ENCODE measurements at regions of chr19 and their contacts with region 1.

Region 1: DNA sequence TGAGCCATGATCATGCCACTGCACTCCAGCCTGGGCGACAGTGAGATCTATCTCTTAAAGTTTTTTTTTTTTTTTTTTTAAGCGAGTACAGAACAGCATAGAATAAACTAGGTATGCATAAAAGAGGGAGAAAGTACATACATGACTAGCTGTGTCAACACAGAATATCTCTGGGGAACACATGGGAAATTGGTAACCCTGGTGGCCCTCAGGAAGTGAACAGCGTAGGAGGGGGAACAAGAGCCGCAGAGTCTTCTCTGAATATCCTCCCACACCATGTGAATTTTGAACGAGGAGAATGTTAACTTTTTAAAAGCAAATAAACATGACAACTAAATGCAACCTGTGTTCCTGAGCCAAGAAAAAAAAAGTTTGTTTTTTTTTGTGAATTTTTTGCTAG is 15.2 kb downstream of the PHLDB3 start:
- H3K4me3 Mint-ChIP-seq: no peak overlapping the region
- H3K27ac Mint-ChIP-seq: peak overlapping the region; percentile 18
- H3K4me1 Mint-ChIP-seq: peaks cover 49% of the 10 kb centered on the region
- H3K27me3 Mint-ChIP-seq: no peaks in the 10 kb centered on the region

Region 2: DNA sequence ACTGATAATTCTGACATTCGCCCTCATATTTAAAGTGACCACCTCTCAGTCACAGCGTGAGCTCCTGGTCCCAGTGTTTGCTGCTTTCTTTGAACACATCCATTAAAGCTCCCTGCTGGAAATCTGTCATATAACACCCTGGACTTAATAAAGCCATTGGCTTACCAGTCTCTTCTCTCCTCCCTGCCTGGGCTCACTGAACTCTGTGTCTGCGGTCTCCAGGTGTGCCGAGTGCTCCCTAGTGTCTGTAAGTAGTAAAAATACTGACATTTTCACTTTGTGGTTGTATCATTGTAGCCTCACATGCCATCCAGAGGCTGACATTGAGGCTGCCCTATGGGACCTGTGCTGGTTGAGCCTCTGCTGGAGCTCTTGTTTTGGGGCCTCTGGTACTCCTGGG is 460.4 kb before region 1 on chr19:
- intact Hi-C with region 1: no loop called
- H3K4me3 Mint-ChIP-seq: no peak overlapping the region
- H3K27ac Mint-ChIP-seq: no peak overlapping the region
- H3K4me1 Mint-ChIP-seq: no peaks in the 10 kb centered on the region
- H3K27me3 Mint-ChIP-seq: peaks cover 1% of the 10 kb centered on the region

Region 3: DNA sequence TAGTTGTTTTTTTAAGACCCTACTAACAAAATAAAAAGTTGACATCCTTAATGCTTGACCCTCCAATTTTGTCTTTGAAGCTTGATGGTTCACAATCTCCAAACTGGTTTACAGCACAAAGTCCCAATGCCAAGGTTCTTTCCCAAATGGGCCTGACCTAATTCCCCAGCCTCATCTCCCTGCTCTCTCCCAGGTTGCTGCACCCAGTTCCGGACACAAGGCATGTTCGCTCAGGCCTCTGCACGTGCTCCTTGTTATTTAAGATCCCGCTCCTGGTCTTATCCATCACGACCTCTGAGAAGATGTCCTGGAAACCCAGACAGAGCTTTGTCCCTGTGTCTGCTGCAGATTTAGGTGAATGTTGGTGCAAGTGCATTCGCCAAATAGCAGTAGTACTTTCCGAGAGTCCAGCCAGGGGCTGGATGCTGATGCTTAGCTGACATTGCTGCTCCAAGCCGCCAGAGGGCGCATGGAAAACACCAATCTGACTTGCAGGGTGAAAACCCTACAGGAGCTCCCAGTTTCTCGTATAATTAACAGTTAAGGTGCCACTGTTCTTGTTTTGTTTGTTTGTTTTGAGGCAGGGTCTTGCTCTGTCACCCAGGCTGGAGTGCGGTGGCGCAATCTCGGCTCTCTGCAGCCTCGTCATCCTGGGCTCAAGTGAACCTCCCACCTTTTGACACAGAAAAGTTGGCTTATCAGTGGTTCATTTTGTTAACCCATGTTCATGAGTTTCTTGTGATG is 42.4 kb before region 1 on chr19:
- intact Hi-C with region 1: loop called (anchors 5 kb)
- H3K4me3 Mint-ChIP-seq: no peak overlapping the region
- H3K27ac Mint-ChIP-seq: no peak overlapping the region
- H3K4me1 Mint-ChIP-seq: peaks cover 79% of the 10 kb centered on the region
- H3K27me3 Mint-ChIP-seq: peaks cover 10% of the 10 kb centered on the region

Region 4: DNA sequence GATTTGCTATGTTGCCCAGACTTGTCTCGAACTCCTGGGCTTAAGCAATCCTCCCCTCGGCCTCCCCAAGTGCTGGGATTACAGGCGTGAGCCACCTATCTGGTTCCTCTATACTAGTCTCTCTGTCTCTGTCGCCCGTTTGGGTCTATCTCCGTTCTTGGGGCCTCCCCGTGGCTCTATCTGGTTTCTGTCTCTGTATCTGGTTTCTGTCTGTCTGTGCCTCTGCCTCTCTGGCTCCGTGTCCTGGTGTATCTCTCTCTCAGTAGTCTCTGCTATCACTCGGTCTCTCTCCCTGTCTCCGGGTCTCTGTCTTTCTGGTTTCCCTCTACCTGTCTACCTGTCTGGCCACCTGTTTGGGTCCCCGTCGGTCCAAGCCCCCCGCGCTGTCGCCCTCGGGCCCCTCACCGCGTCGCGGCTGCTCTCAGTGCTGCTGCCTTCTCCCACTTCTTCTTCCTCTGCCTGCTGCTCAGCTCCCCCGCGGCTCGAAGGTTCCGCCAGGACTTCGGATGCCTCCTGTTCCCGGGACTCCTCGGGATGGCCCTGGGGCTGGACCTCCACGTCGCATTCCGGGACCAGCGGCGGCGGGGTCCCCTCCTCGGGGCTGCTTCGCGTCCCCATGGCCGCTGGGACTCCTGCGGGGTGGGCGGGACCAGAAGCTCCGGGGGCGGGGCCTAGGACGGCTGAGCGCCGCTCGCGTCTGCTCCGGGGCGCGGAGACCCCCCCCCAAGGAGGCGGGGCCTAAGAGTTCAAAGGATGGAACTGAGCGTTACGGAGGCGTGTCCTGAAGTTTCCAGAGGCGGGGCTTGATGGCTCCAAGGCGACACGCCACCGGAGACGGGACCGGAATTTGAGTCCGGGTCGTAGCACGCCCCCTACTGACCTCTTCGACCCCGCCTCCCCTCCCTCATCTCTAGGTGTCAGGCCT is 14.5 kb after region 1 on chr19:
- intact Hi-C with region 1: no loop called
- H3K4me3 Mint-ChIP-seq: peak overlapping the region; percentile 100
- H3K27ac Mint-ChIP-seq: peak overlapping the region; percentile 93
- H3K4me1 Mint-ChIP-seq: peaks cover 44% of the 10 kb centered on the region
- H3K27me3 Mint-ChIP-seq: peaks cover 4% of the 10 kb centered on the region

Region 5: GRCh38 chr19:43584484-43584883 is 95.2 kb after region 1 on chr19:
- intact Hi-C with region 1: no loop called
- H3K4me3 Mint-ChIP-seq: no peak overlapping the region
- H3K27ac Mint-ChIP-seq: peak overlapping the region; percentile 77
- H3K4me1 Mint-ChIP-seq: peaks cover 30% of the 10 kb centered on the region
- H3K27me3 Mint-ChIP-seq: no peaks in the 10 kb centered on the region

Measured in dendritic cell treated with granulocyte-macrophage colony-stimulating factor and Interleukin-4, amounts not matched to agents 40 ng/mL and 50 ng/mL, for 4 days (primary cell).